HCT116 (cell line): ENCODE measurements at regions of chr1 and their contacts with region 1.

Region 1: DNA sequence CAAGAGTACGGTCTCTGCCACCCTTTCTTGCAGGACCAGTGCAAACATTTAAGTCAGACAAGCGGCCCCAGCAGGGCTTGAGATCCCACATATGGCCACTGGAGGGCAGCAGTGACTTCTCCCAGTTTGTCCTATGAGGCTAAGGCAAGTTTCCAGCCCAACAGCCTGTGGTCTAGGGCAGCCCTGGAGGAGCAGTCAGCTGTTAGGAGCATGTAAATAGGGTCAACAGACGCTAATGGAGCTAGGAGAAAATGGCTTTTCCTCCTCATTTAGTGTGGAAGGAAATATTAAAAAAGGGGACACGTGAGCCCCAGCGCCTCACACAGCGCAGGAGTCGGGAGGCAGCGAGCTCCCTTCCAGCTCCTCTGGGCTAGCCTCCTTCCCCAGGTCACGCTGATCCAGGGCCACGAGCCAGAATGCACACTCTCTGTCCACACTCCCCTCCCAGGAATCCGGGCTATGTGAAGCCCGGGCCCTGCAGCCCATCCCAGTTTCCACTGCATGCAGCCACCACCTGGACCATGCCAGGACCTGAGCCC is 95.6 kb downstream of the LAMC2 start:
- DNase-seq: peak; percentile 65
- ATAC-seq: peak; percentile 96
- H3K4me3 ChIP-seq: no peak overlapping the region
- H3K27ac ChIP-seq: no peak overlapping the region
- H3K4me1 ChIP-seq: no peaks in the 10 kb centered on the region
- H3K27me3 ChIP-seq: no peaks in the 10 kb centered on the region
- CTCF ChIP-seq: peak; percentile 87 to 97 (median 90)
- POLR2A ChIP-seq: no peak
- RAD21 ChIP-seq: peak; percentile 88

Region 2: DNA sequence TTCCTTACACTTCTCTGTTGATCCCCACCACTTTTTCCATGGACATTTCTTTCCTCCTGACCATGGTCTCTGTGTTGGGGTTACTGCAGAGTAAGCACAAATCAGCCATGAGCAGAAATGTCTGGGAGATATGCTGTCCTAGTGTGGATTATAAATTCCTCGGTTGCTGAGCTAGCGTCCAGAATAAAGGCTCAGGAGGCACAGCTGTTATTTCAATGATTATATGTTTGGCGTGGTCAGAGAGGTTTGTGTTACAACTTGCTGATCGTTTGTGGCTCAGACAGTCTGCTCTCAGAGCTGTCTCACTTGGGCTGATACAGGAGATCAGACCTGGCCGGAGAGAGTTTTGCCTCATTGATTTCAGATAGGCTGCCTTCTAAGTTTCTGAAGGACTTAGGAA is 133.0 kb before region 1 on chr1:
- CTCF ChIA-PET with region 1: no interaction called
- POLR2A ChIA-PET with region 1: no interaction called
- RAD21 ChIA-PET with region 1: no interaction called
- intact Hi-C with region 1: no loop called
- DNase-seq: no peak
- ATAC-seq: no peak
- H3K4me3 ChIP-seq: no peak overlapping the region
- H3K27ac ChIP-seq: no peak overlapping the region
- H3K4me1 ChIP-seq: no peaks in the 10 kb centered on the region
- H3K27me3 ChIP-seq: no peaks in the 10 kb centered on the region
- CTCF ChIP-seq: no peak
- POLR2A ChIP-seq: no peak
- RAD21 ChIP-seq: no peak

Region 3: GRCh38 chr1:183543619-183544204 is 262.1 kb after region 1 on chr1:
- CTCF ChIA-PET with region 1: no interaction called
- POLR2A ChIA-PET with region 1: no interaction called
- RAD21 ChIA-PET with region 1: no interaction called
- intact Hi-C with region 1: loop called (anchors 1 kb)
- DNase-seq: peak; percentile 23
- ATAC-seq: peak; percentile 98
- H3K4me3 ChIP-seq: no peak overlapping the region
- H3K27ac ChIP-seq: no peak overlapping the region
- H3K4me1 ChIP-seq: peaks cover 0 to 3% of the 10 kb centered on the region in 2 experiments; a peak in 1 of 4 replicates
- H3K27me3 ChIP-seq: no peaks in the 10 kb centered on the region
- CTCF ChIP-seq: peak; percentile 47 to 74 (median 64); a peak in 5 of 6 replicates
- POLR2A ChIP-seq: no peak
- RAD21 ChIP-seq: peak; percentile 62

Region 4: GRCh38 chr1:183580281-183580682 is 298.7 kb after region 1 on chr1:
- CTCF ChIA-PET with region 1: interaction called, 3 read pairs
- POLR2A ChIA-PET with region 1: no interaction called
- RAD21 ChIA-PET with region 1: no interaction called
- intact Hi-C with region 1: loop called (anchors 1 kb)
- DNase-seq: peak; percentile 48
- ATAC-seq: peak; percentile 92
- H3K4me3 ChIP-seq: no peak overlapping the region
- H3K27ac ChIP-seq: no peak overlapping the region
- H3K4me1 ChIP-seq: peaks cover 0 to 9% of the 10 kb centered on the region in 2 experiments; a peak in 2 of 4 replicates
- H3K27me3 ChIP-seq: 0 out of 2 replicates have a peak, but pooled peaks cover 3% of the 10 kb centered on the region
- CTCF ChIP-seq: peak; percentile 39 to 61 (median 51); a peak in 5 of 6 replicates
- POLR2A ChIP-seq: no peak
- RAD21 ChIP-seq: peak; percentile 68

Region 5: DNA sequence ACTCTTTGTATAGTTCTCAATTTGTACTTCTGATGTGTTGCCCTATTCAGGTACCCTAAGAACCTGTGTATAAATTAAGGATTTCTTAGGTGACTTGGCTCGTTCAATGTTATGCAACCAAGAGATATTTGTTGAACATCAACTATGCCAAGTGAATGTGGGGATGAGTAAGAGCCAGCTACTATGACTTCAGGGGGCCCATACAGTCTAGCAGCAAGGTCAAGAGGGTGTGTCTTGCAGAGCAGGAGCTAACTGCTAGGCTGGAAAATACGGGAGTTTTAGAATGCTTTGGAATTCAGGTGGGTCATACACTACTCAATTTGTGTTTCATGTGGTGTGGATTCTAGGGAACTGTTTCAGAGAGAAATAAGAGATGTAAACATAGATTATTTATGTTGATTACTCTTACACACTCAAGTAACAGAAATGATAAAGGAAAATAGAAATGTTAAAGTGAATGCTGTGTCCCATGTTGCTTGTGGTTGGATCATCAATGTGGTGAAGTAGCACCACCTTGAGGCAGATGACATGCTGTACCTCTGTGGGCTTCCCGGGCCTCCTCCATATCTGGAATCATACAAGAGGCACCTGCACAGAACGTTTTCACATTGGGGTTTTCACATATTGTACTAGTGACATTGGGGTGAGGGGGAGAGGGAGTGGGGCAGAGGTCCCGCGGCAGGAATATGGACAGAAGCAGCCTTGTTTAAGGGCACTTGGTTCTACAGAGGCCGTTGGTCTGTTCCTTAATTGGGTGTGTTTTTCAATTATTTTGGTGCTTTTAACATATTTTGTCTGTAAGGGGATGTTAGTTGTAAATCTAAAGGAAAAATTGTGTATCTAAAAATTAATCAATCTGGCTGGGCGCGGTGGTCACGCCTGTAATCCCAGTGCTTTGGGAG is 341.5 kb after region 1 on chr1:
- CTCF ChIA-PET with region 1: interaction called, 8 read pairs
- POLR2A ChIA-PET with region 1: no interaction called
- RAD21 ChIA-PET with region 1: no interaction called
- intact Hi-C with region 1: loop called (anchors 1 kb)
- DNase-seq: peak; percentile 51
- ATAC-seq: peak; percentile 99
- H3K4me3 ChIP-seq: no peak overlapping the region
- H3K27ac ChIP-seq: no peak overlapping the region
- H3K4me1 ChIP-seq: peaks cover 0 to 5% of the 10 kb centered on the region in 2 experiments; a peak in 1 of 4 replicates
- H3K27me3 ChIP-seq: no peaks in the 10 kb centered on the region
- CTCF ChIP-seq: peak; percentile 60 to 76 (median 71); a peak in 5 of 6 replicates
- POLR2A ChIP-seq: no peak
- RAD21 ChIP-seq: peak; percentile 90

Region 6: GRCh38 chr1:183676586-183677189 is 395.1 kb after region 1 on chr1:
- CTCF ChIA-PET with region 1: no interaction called
- POLR2A ChIA-PET with region 1: no interaction called
- RAD21 ChIA-PET with region 1: no interaction called
- intact Hi-C with region 1: loop called (anchors 5 kb)
- DNase-seq: no peak
- ATAC-seq: no peak
- H3K4me3 ChIP-seq: no peak overlapping the region
- H3K27ac ChIP-seq: no peak overlapping the region
- H3K4me1 ChIP-seq: no peaks in the 10 kb centered on the region
- H3K27me3 ChIP-seq: no peaks in the 10 kb centered on the region
- CTCF ChIP-seq: no peak
- POLR2A ChIP-seq: no peak
- RAD21 ChIP-seq: no peak